ENCODE measurements at regions of chr22 and their contacts with region 1.

Region 1: GRCh38 chr22:50620593-50621355 is 7.2 kb downstream of the ARSA start:
- DNase-seq: peak; percentile 77 to 95 (median 83)
- H3K4me3 ChIP-seq: peak overlapping the region; percentile 12 to 80
- H3K4me3 Mint-ChIP-seq: peak overlapping the region; percentile 91 to 96 (median 93)
- H3K27ac ChIP-seq: peak overlapping the region; percentile 85
- H3K27ac Mint-ChIP-seq: peak overlapping the region; percentile 94 to 99 (median 99)
- H3K4me1 ChIP-seq: peaks cover 34% of the 10 kb centered on the region
- H3K4me1 Mint-ChIP-seq: peaks cover 21 to 37% (median 29%) of the 10 kb centered on the region in 4 donors
- H3K27me3 ChIP-seq: no peaks in the 10 kb centered on the region
- H3K27me3 Mint-ChIP-seq: no peaks in the 10 kb centered on the region

Region 2: GRCh38 chr22:50244420-50245213 is 376.2 kb before region 1 on chr22 and contains the start of gene TUBGCP6:
- CTCF ChIA-PET with region 1: interaction called, 11 read pairs
- POLR2A ChIA-PET with region 1: interaction called, 29 read pairs
- intact Hi-C with region 1: loop called (anchors 2 kb)
- DNase-seq: peak; percentile 89 to 93 (median 91)
- H3K4me3 ChIP-seq: peak within 1 kb of the TSS; percentile 37 to 99
- H3K4me3 Mint-ChIP-seq: peak within 1 kb of the TSS; percentile 95 to 100 (median 98)
- H3K27ac ChIP-seq: peak within 1 kb of the TSS; percentile 98
- H3K27ac Mint-ChIP-seq: peak within 1 kb of the TSS; percentile 90 to 100 (median 99)
- H3K4me1 ChIP-seq: peaks cover 69% of the 10 kb centered on the region
- H3K4me1 Mint-ChIP-seq: peaks cover 23 to 64% (median 37%) of the 10 kb centered on the region in 4 donors
- H3K27me3 ChIP-seq: no peaks in the 10 kb centered on the region
- H3K27me3 Mint-ChIP-seq: no peaks in the 10 kb centered on the region
- total RNA-seq, gene TUBGCP6: 132 to 133 TPM

Region 3: GRCh38 chr22:50341977-50342650 is 278.7 kb before region 1 on chr22:
- CTCF ChIA-PET with region 1: interaction called, 14 read pairs
- POLR2A ChIA-PET with region 1: interaction called, 8 read pairs
- intact Hi-C with region 1: loop called (anchors 2 kb)
- DNase-seq: peak; percentile 83 to 89 (median 86)
- H3K4me3 ChIP-seq: peak overlapping the region; percentile 39 to 70
- H3K4me3 Mint-ChIP-seq: peak overlapping the region; percentile 80 to 93 (median 88)
- H3K27ac ChIP-seq: peak overlapping the region; percentile 84
- H3K27ac Mint-ChIP-seq: peak overlapping the region; percentile 92 to 97 (median 95)
- H3K4me1 ChIP-seq: peaks cover 28% of the 10 kb centered on the region
- H3K4me1 Mint-ChIP-seq: peaks cover 3 to 12% (median 5%) of the 10 kb centered on the region in 4 donors
- H3K27me3 ChIP-seq: no peaks in the 10 kb centered on the region
- H3K27me3 Mint-ChIP-seq: no peaks in the 10 kb centered on the region

Region 4: DNA sequence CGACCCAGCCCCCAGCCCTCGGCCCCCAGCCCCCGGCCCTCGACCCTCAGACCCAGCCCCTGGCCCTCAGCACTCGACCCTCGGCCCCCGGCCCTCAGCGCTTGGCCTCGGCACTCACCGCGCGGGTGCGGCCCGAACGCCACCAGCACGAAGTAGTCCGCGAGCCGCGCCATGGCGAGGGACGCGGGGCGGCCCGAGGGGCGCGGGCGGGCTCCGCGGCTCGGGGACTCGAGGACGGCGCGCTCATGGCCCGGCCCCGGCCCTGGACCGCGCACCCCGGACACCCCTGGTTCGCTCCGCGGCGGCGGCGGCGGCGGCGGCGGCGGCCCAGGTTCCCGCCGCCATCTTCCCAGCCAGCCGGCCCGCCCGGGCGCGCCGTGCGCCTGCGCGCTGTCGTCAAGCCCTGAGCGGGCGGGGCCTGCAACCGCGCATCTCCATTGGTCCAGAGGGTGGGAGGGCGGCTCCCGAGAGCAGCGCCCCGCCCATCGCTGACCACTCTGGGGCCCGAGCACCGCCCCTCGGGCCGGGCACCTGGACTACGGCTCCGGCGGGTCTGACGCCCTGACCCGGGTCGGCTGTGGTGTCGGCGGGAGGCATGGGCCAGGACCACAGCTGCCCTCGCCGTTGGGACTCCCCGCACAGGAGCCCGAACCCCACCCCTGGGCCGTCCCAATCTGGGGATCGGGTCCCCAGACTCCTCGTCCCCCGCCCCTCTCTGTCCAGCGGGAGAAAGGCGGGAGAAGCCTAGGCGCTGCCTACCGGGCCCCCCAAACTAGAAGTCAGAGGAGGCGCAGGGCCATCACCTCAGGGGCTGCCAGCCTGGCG is 145.9 kb before region 1 on chr22 and contains the start of gene SBF1:
- CTCF ChIA-PET with region 1: interaction called, 12 read pairs
- POLR2A ChIA-PET with region 1: interaction called, 32 read pairs
- intact Hi-C with region 1: no loop called
- DNase-seq: peak; percentile 83 to 88 (median 84)
- H3K4me3 ChIP-seq: peak within 1 kb of the TSS; percentile 73 to 79
- H3K4me3 Mint-ChIP-seq: peak within 1 kb of the TSS; percentile 88 to 99 (median 95)
- H3K27ac ChIP-seq: peak within 1 kb of the TSS; percentile 75
- H3K27ac Mint-ChIP-seq: peak within 1 kb of the TSS; percentile 89 to 98 (median 94)
- H3K4me1 ChIP-seq: peaks cover 47% of the 10 kb centered on the region
- H3K4me1 Mint-ChIP-seq: peaks cover 28 to 62% (median 40%) of the 10 kb centered on the region in 4 donors
- H3K27me3 ChIP-seq: no peaks in the 10 kb centered on the region
- H3K27me3 Mint-ChIP-seq: no peaks in the 10 kb centered on the region
- total RNA-seq, gene SBF1: 217 to 221 TPM

Region 5: GRCh38 chr22:50525390-50526068 is 95.2 kb before region 1 on chr22 and contains the start of gene SCO2:
- CTCF ChIA-PET with region 1: interaction called, 58 read pairs
- POLR2A ChIA-PET with region 1: interaction called, 160 read pairs
- intact Hi-C with region 1: loop called (anchors 1 kb)
- DNase-seq: peak; percentile 96 to 98 (median 98)
- H3K4me3 ChIP-seq: peak within 1 kb of the TSS; percentile 47 to 81
- H3K4me3 Mint-ChIP-seq: peak within 1 kb of the TSS; percentile 86 to 94 (median 92)
- H3K27ac ChIP-seq: peak within 1 kb of the TSS; percentile 96
- H3K27ac Mint-ChIP-seq: peak within 1 kb of the TSS; percentile 84 to 97 (median 94)
- H3K4me1 ChIP-seq: peaks cover 48% of the 10 kb centered on the region
- H3K4me1 Mint-ChIP-seq: peaks cover 14 to 39% (median 26%) of the 10 kb centered on the region in 4 donors
- H3K27me3 ChIP-seq: no peaks in the 10 kb centered on the region
- H3K27me3 Mint-ChIP-seq: no peaks in the 10 kb centered on the region
- total RNA-seq, gene SCO2: not detected

Region 6: DNA sequence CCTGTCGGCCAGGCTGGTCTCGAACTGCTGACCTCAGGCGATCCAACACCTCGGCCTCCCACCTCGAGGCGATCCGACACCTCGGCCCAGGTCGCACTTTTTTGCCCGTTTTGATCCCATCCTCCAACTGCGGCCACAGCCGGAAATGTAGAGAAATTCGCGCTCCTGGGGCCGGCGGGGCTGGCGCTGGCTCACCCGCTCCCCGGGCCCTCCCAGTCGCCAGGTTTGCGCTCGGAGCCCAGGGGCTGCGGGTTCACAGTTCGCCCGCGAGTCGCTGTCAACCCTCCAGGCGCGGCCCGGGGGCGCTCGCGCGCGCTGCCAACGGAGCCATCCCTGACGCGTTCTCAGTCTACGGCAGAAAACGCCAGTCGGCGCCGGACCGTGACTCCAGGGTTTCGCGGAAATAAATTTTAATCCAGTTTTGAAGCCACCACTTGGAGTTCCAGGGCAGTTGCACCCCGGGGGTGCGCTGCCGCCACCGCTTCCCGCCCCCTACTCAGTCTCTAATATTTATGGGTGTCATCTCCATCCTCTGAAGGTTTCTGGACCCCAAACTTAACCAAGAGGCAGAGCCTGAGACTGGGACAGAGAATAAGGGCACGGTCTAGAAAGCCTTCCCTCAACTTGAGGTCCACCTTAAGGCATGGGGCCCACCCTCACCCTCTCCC is 76.6 kb before region 1 on chr22:
- CTCF ChIA-PET with region 1: interaction called, 28 read pairs
- POLR2A ChIA-PET with region 1: interaction called, 52 read pairs
- intact Hi-C with region 1: loop called (anchors 1 kb)
- DNase-seq: peak; percentile 72 to 82 (median 76)
- H3K4me3 ChIP-seq: peak overlapping the region; percentile 24 to 51
- H3K4me3 Mint-ChIP-seq: peak overlapping the region in 7 of 8 donors; percentile 64 to 79 (median 69)
- H3K27ac ChIP-seq: peak overlapping the region; percentile 59
- H3K27ac Mint-ChIP-seq: peak overlapping the region; percentile 42 to 91 (median 85)
- H3K4me1 ChIP-seq: peaks cover 51% of the 10 kb centered on the region
- H3K4me1 Mint-ChIP-seq: peaks cover 26 to 62% (median 42%) of the 10 kb centered on the region in 4 donors
- H3K27me3 ChIP-seq: no peaks in the 10 kb centered on the region
- H3K27me3 Mint-ChIP-seq: no peaks in the 10 kb centered on the region

Region 7: DNA sequence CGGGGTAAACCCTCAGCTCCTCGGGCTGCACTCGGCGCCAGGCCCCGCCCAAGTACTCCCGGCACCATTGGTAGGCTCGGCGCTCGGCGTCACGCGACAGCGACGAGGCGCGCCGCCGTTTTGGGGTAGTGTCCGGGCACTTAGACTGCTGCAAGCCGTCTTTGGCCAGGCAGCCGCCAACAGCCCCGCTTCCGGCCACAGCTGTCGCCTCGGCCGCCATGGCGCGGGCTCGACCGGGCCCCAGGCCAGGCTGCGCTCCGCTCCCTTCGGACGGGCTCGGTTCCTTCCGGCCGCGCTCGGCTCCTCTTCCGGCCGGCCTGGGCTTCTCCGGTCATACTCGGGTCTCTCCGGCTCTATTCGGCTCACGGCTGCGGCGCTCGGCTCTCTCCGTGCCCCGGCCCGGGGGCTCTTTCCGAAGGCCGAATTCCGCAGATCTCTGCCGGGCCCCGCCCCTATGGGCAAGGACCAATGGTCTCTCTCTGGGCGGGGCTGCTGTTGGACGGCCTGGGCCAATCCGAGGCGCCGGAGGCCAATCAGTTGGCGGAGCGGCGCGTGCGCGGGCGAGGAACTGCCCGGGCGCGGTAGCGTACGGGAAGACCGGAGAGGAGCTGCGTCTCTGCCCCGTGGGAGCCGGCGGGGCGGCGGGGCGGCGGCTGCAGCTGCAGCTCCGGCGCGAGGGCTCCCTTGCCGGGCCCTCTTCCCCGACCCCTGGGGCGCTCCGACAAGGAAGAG is 38.0 kb before region 1 on chr22 and contains the start of gene CHKB:
- CTCF ChIA-PET with region 1: interaction called, 8 read pairs
- POLR2A ChIA-PET with region 1: interaction called, 43 read pairs
- intact Hi-C with region 1: loop called (anchors 1 kb)
- DNase-seq: peak; percentile 98 to 99 (median 98)
- H3K4me3 ChIP-seq: peak within 1 kb of the TSS; percentile 63 to 91
- H3K4me3 Mint-ChIP-seq: peak within 1 kb of the TSS; percentile 90 to 96 (median 93)
- H3K27ac ChIP-seq: peak within 1 kb of the TSS; percentile 97
- H3K27ac Mint-ChIP-seq: peak within 1 kb of the TSS; percentile 91 to 98 (median 96)
- H3K4me1 ChIP-seq: peaks cover 21% of the 10 kb centered on the region
- H3K4me1 Mint-ChIP-seq: peaks cover 8 to 39% (median 16%) of the 10 kb centered on the region in 4 donors
- H3K27me3 ChIP-seq: no peaks in the 10 kb centered on the region
- H3K27me3 Mint-ChIP-seq: no peaks in the 10 kb centered on the region
- total RNA-seq, gene CHKB: 178 to 196 TPM